Activated naive CD4-positive, alpha-beta T cell treated with anti-CD3 and anti-CD28 coated beads for 36 hours (primary cell): ENCODE measurements at regions of chr7 and their contacts with region 1.

Region 1: GRCh38 chr7:90613088-90613498 is 17.0 kb downstream of the CDK14 start:
- DNase-seq: peak; percentile 50
- H3K4me3 Mint-ChIP-seq: no peak overlapping the region
- H3K27ac Mint-ChIP-seq: peak overlapping the region; percentile 70
- H3K4me1 Mint-ChIP-seq: peaks cover 18% of the 10 kb centered on the region
- H3K27me3 Mint-ChIP-seq: peaks cover 14% of the 10 kb centered on the region

Region 2: GRCh38 chr7:90290244-90291113 is 322.6 kb before region 1 on chr7:
- CTCF ChIA-PET with region 1: no interaction called
- intact Hi-C with region 1: no loop called
- DNase-seq: no peak
- H3K4me3 Mint-ChIP-seq: no peak overlapping the region
- H3K27ac Mint-ChIP-seq: no peak overlapping the region
- H3K4me1 Mint-ChIP-seq: no peaks in the 10 kb centered on the region
- H3K27me3 Mint-ChIP-seq: peaks cover 5% of the 10 kb centered on the region

Region 3: GRCh38 chr7:90346336-90347125 is 266.6 kb before region 1 on chr7 and contains the start of gene GTPBP10:
- CTCF ChIA-PET with region 1: no interaction called
- intact Hi-C with region 1: loop called (anchors 2 kb)
- DNase-seq: peak; percentile 96
- H3K4me3 Mint-ChIP-seq: peak within 1 kb of the TSS; percentile 94
- H3K27ac Mint-ChIP-seq: peak within 1 kb of the TSS; percentile 96
- H3K4me1 Mint-ChIP-seq: peaks cover 34% of the 10 kb centered on the region
- H3K27me3 Mint-ChIP-seq: no peaks in the 10 kb centered on the region
- total RNA-seq, gene GTPBP10: 35.8 to 39.3 TPM

Region 4: DNA sequence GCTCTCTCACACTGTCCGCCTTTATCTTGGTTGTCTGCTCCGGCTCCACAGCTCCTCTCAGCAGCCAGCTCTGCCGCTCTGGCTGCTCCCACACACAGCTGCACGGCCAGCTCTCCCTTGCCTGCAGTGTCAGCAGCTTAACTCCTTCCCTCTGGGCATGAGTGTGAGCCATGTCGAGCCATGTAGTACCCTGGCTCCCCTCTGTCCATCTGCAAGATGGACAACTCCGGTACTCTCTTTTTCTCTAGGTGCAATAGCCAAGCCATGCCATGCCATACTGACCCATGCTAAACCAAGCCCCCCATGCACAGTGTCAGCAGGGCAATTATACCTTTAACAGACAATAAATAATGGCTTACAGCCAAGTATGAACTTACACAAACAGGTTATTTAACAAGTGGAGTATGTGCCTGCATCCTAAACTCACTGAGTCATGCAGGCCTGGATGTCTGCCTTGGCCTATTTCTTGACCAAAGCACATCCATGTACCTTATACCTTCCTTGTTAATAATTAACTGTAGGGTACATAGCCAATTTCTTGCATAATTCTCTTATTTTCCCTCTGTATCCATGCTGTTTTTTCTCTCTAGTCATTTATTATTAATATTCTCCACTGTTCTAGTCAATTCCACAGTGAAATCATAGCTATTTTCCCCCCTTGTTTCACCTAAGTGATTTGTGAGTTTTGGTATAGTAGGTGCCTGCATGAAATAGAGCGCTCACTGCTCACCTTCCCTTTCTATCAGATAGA is 153.9 kb after region 1 on chr7:
- CTCF ChIA-PET with region 1: no interaction called
- intact Hi-C with region 1: no loop called
- DNase-seq: no peak
- H3K4me3 Mint-ChIP-seq: no peak overlapping the region
- H3K27ac Mint-ChIP-seq: no peak overlapping the region
- H3K4me1 Mint-ChIP-seq: no peaks in the 10 kb centered on the region
- H3K27me3 Mint-ChIP-seq: no peaks in the 10 kb centered on the region